Ascending aorta (tissue), 2 donors: ENCODE measurements at regions of chr7 and their contacts with region 1.

Region 1: DNA sequence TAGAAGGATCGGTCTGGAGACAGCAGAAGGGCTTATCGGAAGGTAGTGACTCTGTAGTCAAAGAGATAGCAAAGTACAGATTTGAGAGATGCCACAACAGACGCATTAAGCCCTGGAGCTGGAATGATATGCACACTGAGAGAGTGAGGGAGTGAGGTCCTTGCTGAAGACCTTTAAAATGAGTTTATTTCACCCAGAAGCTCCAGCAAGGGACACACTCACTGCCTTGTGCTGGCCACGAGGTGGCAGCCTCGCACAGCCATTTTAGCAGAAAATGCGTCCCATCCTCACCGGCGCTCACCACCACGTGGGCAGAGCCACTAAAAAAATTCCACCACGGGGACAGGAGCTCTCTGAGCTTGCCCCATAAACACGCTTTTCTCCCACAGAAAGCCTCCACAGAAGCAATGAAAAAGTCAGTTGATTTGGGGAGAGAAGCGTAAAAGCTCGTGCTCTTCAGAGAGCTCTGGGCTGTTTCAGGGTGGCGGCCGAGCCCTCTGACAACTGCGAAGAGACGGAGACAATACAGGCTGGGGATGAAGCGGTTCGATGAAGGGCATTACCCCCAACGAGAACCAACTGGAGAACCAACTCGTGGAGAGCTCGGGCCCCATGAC is 163.0 kb upstream of the KLF14 start:
- DNase-seq: peak in 1 of 2 donors; percentile 78
- H3K4me3 ChIP-seq: no peak overlapping the region
- H3K27ac ChIP-seq: peak overlapping the region; percentile 91 to 93
- H3K4me1 ChIP-seq: peaks cover 6 to 45% of the 10 kb centered on the region in 2 donors
- H3K27me3 ChIP-seq: no peaks in the 10 kb centered on the region
- CTCF ChIP-seq: peak; percentile 86

Region 2: GRCh38 chr7:129952653-129953560 is 944.1 kb before region 1 on chr7 and contains the start of gene UBE2H:
- intact Hi-C with region 1: loop called (anchors 10 kb)
- DNase-seq: peak; percentile 72 to 96
- H3K4me3 ChIP-seq: peak within 1 kb of the TSS; percentile 80 to 92
- H3K27ac ChIP-seq: peak within 1 kb of the TSS; percentile 91
- H3K4me1 ChIP-seq: peaks cover 6 to 13% of the 10 kb centered on the region in 2 donors
- H3K27me3 ChIP-seq: no peaks in the 10 kb centered on the region
- CTCF ChIP-seq: no peak
- total RNA-seq, gene UBE2H: 83.9 TPM

Region 3: GRCh38 chr7:131007394-131008330 is 110.7 kb after region 1 on chr7:
- intact Hi-C with region 1: loop called (anchors 2 kb)
- DNase-seq: peak in 1 of 2 donors; percentile 79
- H3K4me3 ChIP-seq: no peak overlapping the region
- H3K27ac ChIP-seq: peak overlapping the region; percentile 75 to 79
- H3K4me1 ChIP-seq: peaks cover 11 to 37% of the 10 kb centered on the region in 2 donors
- H3K27me3 ChIP-seq: no peaks in the 10 kb centered on the region
- CTCF ChIP-seq: peak; percentile 46 to 66 (median 55)

Region 4: GRCh38 chr7:131284702-131285419 is 387.9 kb after region 1 on chr7:
- intact Hi-C with region 1: loop called (anchors 10 kb)
- DNase-seq: peak; percentile 53 to 93
- H3K4me3 ChIP-seq: peak overlapping the region in 1 of 2 donors; percentile 29
- H3K27ac ChIP-seq: peak overlapping the region; percentile 91 to 92
- H3K4me1 ChIP-seq: peaks cover 11 to 28% of the 10 kb centered on the region in 2 donors
- H3K27me3 ChIP-seq: no peaks in the 10 kb centered on the region
- CTCF ChIP-seq: no peak

Region 5: DNA sequence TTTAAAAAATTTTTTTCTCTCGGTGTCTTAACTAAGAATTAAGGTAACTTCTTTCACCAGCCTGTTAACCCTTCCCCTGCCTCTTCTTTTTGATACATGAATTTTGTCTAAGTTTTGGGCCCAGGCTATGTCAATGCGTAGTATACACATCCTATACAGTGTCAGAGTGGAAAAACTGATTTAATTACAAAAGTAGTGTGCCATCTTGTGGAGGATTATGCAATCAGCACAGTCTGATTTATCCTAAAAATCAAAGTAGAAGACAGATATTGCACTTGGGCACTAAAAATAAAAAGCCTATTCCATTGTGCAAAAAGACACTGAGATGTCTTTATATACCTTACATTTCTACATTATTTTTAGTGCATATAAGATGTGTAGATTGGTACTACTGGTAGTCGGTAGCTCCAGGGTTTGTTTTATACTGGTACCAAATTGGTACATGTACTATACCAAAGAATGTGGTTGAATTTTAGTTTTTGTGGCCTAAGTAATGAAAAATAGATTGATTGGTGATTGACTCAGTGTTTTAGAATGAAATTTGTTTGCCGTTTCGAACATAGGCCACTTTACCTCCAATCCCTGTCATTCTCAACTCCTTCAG is 527.3 kb after region 1 on chr7:
- intact Hi-C with region 1: loop called (anchors 10 kb)
- DNase-seq: no peak
- H3K4me3 ChIP-seq: no peak overlapping the region
- H3K27ac ChIP-seq: no peak overlapping the region
- H3K4me1 ChIP-seq: peaks cover 0 to 3% of the 10 kb centered on the region in 2 donors
- H3K27me3 ChIP-seq: no peaks in the 10 kb centered on the region
- CTCF ChIP-seq: peak; percentile 40 to 59 (median 43)

Region 6: GRCh38 chr7:132666071-132666774 is 1769.2 kb after region 1 on chr7:
- intact Hi-C with region 1: no loop called
- DNase-seq: no peak
- H3K4me3 ChIP-seq: no peak overlapping the region
- H3K27ac ChIP-seq: no peak overlapping the region
- H3K4me1 ChIP-seq: no peaks in the 10 kb centered on the region
- H3K27me3 ChIP-seq: no peaks in the 10 kb centered on the region
- CTCF ChIP-seq: no peak